ENCODE measurements at regions of chr12 and their contacts with region 1.

Region 1: GRCh38 chr12:105382771-105383622 is 52.5 kb downstream of the C12orf75 start:
- DNase-seq: peak; percentile 17
- ATAC-seq: peak; percentile 76
- H3K4me3 ChIP-seq: no peak overlapping the region
- H3K27ac ChIP-seq: no peak overlapping the region
- H3K4me1 ChIP-seq: no peaks in the 10 kb centered on the region
- H3K27me3 ChIP-seq: no peaks in the 10 kb centered on the region
- CTCF ChIP-seq: peak; percentile 65 to 82 (median 82)
- EP300 ChIP-seq: no peak
- POLR2A ChIP-seq: no peak
- RAD21 ChIP-seq: peak; percentile 96

Region 2: GRCh38 chr12:104352106-104352713 is 1030.8 kb before region 1 on chr12:
- CTCF ChIA-PET with region 1: no interaction called
- POLR2A ChIA-PET with region 1: no interaction called
- RAD21 ChIA-PET with region 1: no interaction called
- SMC1A ChIA-PET with region 1: no interaction called
- in situ Hi-C with region 1: no loop called
- intact Hi-C with region 1: no loop called
- DNase-seq: no peak
- ATAC-seq: no peak
- H3K4me3 ChIP-seq: no peak overlapping the region
- H3K27ac ChIP-seq: no peak overlapping the region
- H3K4me1 ChIP-seq: peaks cover 9% of the 10 kb centered on the region
- H3K27me3 ChIP-seq: no peaks in the 10 kb centered on the region
- CTCF ChIP-seq: no peak
- EP300 ChIP-seq: no peak
- POLR2A ChIP-seq: no peak
- RAD21 ChIP-seq: no peak

Region 3: DNA sequence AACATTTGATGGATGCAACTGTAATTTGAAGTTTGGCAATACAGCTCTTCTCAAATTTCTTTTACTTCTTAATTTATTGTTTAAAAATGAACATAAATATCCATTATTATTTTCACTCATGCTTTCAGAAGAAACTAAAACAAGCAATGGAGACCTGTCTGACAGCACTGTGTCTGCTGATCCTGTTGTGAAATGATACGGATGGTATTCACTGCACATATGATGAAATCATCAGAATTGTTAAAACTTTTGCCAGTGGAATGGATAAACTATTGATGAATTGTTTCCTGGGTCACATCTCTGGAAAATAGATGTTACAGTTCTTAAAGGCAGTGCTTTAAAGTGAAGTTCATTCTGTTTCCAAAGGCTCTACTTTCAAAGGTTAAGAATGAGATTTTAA is 216.3 kb before region 1 on chr12:
- CTCF ChIA-PET with region 1: no interaction called
- POLR2A ChIA-PET with region 1: no interaction called
- RAD21 ChIA-PET with region 1: no interaction called
- SMC1A ChIA-PET with region 1: no interaction called
- in situ Hi-C with region 1: no loop called
- intact Hi-C with region 1: loop called (anchors 5 kb)
- DNase-seq: no peak
- ATAC-seq: no peak
- H3K4me3 ChIP-seq: no peak overlapping the region
- H3K27ac ChIP-seq: no peak overlapping the region
- H3K4me1 ChIP-seq: no peaks in the 10 kb centered on the region
- H3K27me3 ChIP-seq: no peaks in the 10 kb centered on the region
- CTCF ChIP-seq: no peak
- EP300 ChIP-seq: no peak
- POLR2A ChIP-seq: no peak
- RAD21 ChIP-seq: no peak

Region 4: GRCh38 chr12:105253882-105254513 is 129.0 kb before region 1 on chr12:
- CTCF ChIA-PET with region 1: no interaction called
- POLR2A ChIA-PET with region 1: no interaction called
- RAD21 ChIA-PET with region 1: no interaction called
- SMC1A ChIA-PET with region 1: no interaction called
- in situ Hi-C with region 1: no loop called
- intact Hi-C with region 1: no loop called
- DNase-seq: no peak
- ATAC-seq: no peak
- H3K4me3 ChIP-seq: no peak overlapping the region
- H3K27ac ChIP-seq: no peak overlapping the region
- H3K4me1 ChIP-seq: no peaks in the 10 kb centered on the region
- H3K27me3 ChIP-seq: no peaks in the 10 kb centered on the region
- CTCF ChIP-seq: no peak
- EP300 ChIP-seq: no peak
- POLR2A ChIP-seq: no peak
- RAD21 ChIP-seq: no peak

Region 5: DNA sequence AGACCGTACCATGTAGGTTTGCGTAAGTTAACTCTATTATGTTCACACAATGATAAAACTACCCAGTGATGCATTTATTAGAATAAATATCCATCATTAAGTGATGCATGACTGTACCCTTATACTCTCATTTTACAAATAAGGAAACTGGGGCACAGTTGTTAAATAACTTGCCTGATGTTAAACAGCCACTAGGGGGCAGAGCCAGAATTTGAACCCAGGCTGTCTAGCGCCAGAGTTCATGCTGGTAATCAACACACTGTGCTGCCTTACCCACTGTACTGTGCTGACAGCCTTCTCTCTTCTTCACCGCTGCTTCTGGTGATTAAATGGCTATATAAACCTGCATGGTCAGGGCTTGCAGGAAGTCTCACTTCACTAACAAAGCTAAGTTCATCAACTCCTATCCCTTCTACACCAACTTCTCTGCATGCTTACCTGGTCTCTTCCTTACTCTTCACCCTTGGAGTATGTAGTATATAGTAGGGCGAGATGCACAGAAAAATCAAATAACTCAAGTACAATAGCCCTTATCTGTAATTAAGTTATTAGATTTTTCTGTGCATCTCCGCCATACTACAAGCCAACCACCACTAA is 103.4 kb before region 1 on chr12:
- CTCF ChIA-PET with region 1: interaction called, 16 read pairs
- POLR2A ChIA-PET with region 1: no interaction called
- RAD21 ChIA-PET with region 1: interaction called, 3 read pairs
- SMC1A ChIA-PET with region 1: interaction called, 3 read pairs
- in situ Hi-C with region 1: loop called (anchors 5 kb)
- intact Hi-C with region 1: loop called (anchors 1 kb)
- DNase-seq: no peak
- ATAC-seq: peak; percentile 96
- H3K4me3 ChIP-seq: no peak overlapping the region
- H3K27ac ChIP-seq: no peak overlapping the region
- H3K4me1 ChIP-seq: no peaks in the 10 kb centered on the region
- H3K27me3 ChIP-seq: no peaks in the 10 kb centered on the region
- CTCF ChIP-seq: peak; percentile 73 to 77 (median 75); a peak in 5 of 6 replicates
- EP300 ChIP-seq: no peak
- POLR2A ChIP-seq: no peak
- RAD21 ChIP-seq: peak; percentile 72